ENCODE measurements at regions of chr17 and their contacts with region 1.

Region 1: DNA sequence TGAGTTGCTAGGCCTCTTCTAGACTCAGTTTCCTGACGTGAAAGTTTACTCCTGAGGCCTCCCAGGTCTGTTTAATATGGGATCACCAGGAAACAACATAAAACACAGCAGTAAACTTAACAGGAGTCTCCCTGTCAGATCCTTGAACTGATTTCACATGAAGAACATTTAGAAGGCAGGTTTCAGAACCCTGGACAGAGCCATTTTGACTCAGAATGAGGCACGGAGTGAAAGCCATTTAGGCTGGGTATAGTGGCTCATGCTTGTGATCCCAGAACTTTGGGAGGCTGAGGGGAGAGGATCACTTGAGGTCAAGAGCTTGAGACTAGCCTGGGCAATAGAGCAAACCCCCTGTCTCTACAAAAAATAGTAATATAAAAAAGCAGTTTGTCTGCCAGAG is 289.1 kb downstream of the CA10 start:
- DNase-seq: peak; percentile 19
- H3K4me3 ChIP-seq: no peak overlapping the region
- H3K27ac ChIP-seq: no peak overlapping the region
- H3K4me1 ChIP-seq: no peaks in the 10 kb centered on the region
- H3K27me3 ChIP-seq: peaks cover 2% of the 10 kb centered on the region
- CTCF ChIP-seq: no peak

Region 2: DNA sequence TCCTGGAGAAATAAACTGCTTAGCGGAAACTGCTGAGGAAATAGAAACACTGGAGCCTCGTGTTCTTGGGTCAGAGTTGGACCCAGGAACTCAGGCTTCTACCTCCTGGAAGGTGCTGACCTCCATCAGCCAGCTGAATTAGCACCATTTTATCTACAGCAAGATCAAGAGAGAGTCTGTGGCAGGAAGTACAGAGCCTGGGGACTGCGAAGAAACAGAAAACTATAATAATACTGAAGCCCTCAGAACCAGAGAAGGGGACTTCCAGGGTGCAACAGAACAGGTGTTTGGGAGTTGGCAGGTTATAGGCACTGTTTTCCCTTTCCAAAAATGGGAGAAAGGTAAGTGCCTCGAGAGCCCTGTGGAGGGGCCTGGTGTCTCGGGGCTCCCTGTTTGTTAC is 90.5 kb before region 1 on chr17:
- CTCF ChIA-PET with region 1: no interaction called
- dilution Hi-C with region 1: loop called (anchors 5 kb)
- in situ Hi-C with region 1: no loop called
- intact Hi-C with region 1: no loop called
- DNase-seq: no peak
- H3K4me3 ChIP-seq: no peak overlapping the region
- H3K27ac ChIP-seq: no peak overlapping the region
- H3K4me1 ChIP-seq: no peaks in the 10 kb centered on the region
- H3K27me3 ChIP-seq: peaks cover 2% of the 10 kb centered on the region
- CTCF ChIP-seq: no peak

Region 3: DNA sequence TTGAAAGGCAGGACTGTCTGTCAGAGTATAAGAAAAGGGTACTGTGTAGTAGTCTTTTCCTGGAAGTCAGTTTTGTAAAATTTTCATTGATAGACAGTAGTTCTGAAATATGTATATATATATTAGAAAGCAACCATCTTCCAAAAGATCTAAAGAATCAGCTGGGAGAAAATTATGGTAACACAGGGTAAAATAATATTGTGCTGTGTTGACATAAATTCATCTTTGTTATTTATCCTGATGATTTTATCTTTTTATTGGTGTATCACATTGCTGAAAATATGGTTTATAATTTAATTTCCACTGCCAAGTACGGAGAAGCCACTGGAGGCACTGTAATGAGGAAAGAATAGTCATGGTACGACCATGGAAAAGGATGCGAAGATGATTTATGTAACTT is 35.8 kb before region 1 on chr17:
- CTCF ChIA-PET with region 1: no interaction called
- dilution Hi-C with region 1: no loop called
- in situ Hi-C with region 1: no loop called
- intact Hi-C with region 1: no loop called
- DNase-seq: no peak
- H3K4me3 ChIP-seq: no peak overlapping the region
- H3K27ac ChIP-seq: no peak overlapping the region
- H3K4me1 ChIP-seq: no peaks in the 10 kb centered on the region
- H3K27me3 ChIP-seq: no peaks in the 10 kb centered on the region
- CTCF ChIP-seq: no peak

Region 4: GRCh38 chr17:51921500-51921899 is 52.1 kb after region 1 on chr17:
- CTCF ChIA-PET with region 1: no interaction called
- dilution Hi-C with region 1: no loop called
- in situ Hi-C with region 1: no loop called
- intact Hi-C with region 1: no loop called
- DNase-seq: no peak
- H3K4me3 ChIP-seq: no peak overlapping the region
- H3K27ac ChIP-seq: no peak overlapping the region
- H3K4me1 ChIP-seq: no peaks in the 10 kb centered on the region
- H3K27me3 ChIP-seq: peaks cover 2% of the 10 kb centered on the region
- CTCF ChIP-seq: no peak